CD8-positive, alpha-beta T cell (primary cell): ENCODE measurements at regions of chr7 and their contacts with region 1.

Region 1: DNA sequence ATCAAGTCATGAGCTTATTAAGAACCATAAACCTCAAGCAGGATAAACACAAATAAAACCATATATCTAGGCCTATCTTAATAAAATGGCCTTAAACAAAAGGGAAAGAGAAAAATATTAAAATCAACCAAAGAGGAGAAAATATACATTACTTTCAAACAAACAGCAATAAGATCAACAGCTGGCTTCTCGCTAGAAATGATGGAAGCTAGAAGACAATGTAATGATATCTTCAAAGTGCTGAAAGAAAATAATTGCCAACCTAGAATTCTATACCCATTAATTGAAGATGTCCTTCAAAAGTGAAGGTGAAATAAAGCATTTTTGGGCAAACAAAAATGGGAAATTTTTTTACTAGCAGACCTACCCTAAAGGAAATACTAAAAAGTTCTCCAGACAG is 142.9 kb upstream of the PODXL start:
- DNase-seq: no peak
- ATAC-seq: no peak
- H3K4me3 ChIP-seq: no peak overlapping the region
- H3K4me3 Mint-ChIP-seq: no peak overlapping the region
- H3K27ac ChIP-seq: no peak overlapping the region
- H3K27ac Mint-ChIP-seq: no peak overlapping the region
- H3K4me1 ChIP-seq: no peaks in the 10 kb centered on the region
- H3K4me1 Mint-ChIP-seq: no peaks in the 10 kb centered on the region
- H3K27me3 ChIP-seq: no peaks in the 10 kb centered on the region
- H3K27me3 Mint-ChIP-seq: peaks cover 5% of the 10 kb centered on the region
- CTCF ChIP-seq: no peak

Region 2: DNA sequence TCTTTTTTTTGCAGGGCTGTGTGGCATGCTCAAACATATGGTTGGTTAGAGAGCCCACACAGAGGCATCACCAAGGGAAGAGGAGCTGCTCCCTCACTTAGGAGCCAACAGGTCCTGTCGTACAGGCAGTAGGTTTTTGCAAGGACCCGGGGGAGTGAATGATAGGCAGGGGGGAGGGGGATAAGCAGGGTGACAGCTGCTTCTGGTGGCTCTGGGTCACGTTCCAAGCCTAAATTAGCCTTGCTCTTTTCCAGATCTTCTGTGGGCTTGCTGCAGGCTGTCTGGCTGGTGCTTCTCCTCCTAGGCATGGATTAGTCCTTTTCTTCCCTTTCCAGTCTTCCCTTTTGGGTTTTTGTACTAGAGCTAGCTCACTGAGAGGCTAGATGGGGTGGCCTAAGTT is 25.2 kb before region 1 on chr7:
- CTCF ChIA-PET with region 1: no interaction called
- POLR2A ChIA-PET with region 1: no interaction called
- intact Hi-C with region 1: no loop called
- DNase-seq: no peak
- ATAC-seq: no peak
- H3K4me3 ChIP-seq: no peak overlapping the region
- H3K4me3 Mint-ChIP-seq: no peak overlapping the region
- H3K27ac ChIP-seq: no peak overlapping the region
- H3K27ac Mint-ChIP-seq: no peak overlapping the region
- H3K4me1 ChIP-seq: no peaks in the 10 kb centered on the region
- H3K4me1 Mint-ChIP-seq: no peaks in the 10 kb centered on the region
- H3K27me3 ChIP-seq: no peaks in the 10 kb centered on the region
- H3K27me3 Mint-ChIP-seq: peaks cover 25% of the 10 kb centered on the region
- CTCF ChIP-seq: no peak

Region 3: GRCh38 chr7:131688738-131689661 is 10.3 kb before region 1 on chr7:
- CTCF ChIA-PET with region 1: interaction called, 12 read pairs
- POLR2A ChIA-PET with region 1: no interaction called
- intact Hi-C with region 1: no loop called
- DNase-seq: peak; percentile 14 to 74 (median 53)
- ATAC-seq: peak; percentile 65
- H3K4me3 ChIP-seq: no peak overlapping the region
- H3K4me3 Mint-ChIP-seq: no peak overlapping the region
- H3K27ac ChIP-seq: no peak overlapping the region
- H3K27ac Mint-ChIP-seq: no peak overlapping the region
- H3K4me1 ChIP-seq: no peaks in the 10 kb centered on the region
- H3K4me1 Mint-ChIP-seq: peaks cover 3% of the 10 kb centered on the region
- H3K27me3 ChIP-seq: peaks cover 0 to 5% of the 10 kb centered on the region in 2 experiments
- H3K27me3 Mint-ChIP-seq: peaks cover 38% of the 10 kb centered on the region
- CTCF ChIP-seq: peak; percentile 85